Activated naive CD4-positive, alpha-beta T cell treated with anti-CD3 and anti-CD28 coated beads for 36 hours (primary cell): ENCODE measurements at regions of chr19 and their contacts with region 1.

Region 1: DNA sequence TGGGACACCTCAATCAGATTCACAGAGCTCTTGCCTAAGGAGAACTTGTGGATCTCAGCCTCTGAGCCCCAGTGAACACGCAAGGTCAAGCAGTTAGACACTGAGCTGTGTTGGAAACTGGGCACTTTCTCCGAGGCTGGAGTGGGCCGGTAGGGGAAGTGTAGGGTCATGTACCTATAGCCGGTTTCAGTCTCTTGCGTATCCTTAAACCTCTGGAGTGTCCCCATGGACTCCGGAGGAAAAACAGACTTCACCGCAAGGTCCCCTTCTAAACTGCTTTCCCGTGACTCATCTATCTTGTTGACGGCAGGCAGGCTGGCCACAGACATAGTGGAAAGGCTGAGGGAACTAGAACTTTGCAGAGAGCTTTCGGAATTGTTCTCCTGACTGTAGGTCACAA is 11.3 kb downstream of the IQCN start:
- DNase-seq: no peak
- H3K4me3 Mint-ChIP-seq: no peak overlapping the region
- H3K27ac Mint-ChIP-seq: no peak overlapping the region
- H3K4me1 Mint-ChIP-seq: no peaks in the 10 kb centered on the region
- H3K27me3 Mint-ChIP-seq: no peaks in the 10 kb centered on the region

Region 2: DNA sequence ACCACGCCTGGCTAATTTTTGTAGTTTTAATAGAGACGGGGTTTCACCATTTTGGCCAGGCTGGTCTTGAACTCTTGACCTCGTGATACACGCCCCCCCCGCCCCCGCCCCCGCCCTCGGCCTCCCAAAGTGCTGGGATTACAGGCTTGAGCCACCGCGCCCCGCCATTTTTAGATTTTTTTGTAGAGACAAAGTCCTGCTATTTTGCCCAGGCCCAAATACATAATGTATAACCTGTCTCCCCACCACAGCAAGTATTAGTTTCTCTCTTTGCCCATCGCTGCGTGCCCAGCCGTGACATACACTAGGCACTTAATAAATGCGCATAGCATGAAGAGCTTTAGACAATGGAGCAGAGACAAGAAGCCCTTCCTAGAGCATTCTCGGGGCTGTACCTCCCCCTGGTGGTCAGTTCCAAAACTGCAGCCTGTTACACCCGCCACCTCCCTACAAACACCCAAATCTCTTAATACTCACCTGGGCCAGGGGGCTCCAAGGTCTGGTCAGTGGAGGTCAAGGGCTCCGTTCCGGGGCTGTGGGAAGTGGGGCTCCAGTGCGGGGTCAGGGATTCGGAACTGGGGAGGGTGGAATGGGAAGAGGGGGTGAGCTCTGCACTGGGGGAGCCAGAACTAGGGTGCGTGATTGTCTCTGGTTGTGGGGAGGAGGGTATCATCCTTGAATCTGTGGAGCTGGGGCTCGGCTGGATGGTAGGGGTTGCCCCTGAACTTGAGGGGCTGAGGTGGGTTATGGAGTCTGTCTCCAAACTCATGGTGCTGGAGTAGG is 11.1 kb before region 1 on chr19:
- CTCF ChIA-PET with region 1: interaction called, 13 read pairs
- intact Hi-C with region 1: no loop called
- DNase-seq: peak; percentile 90
- H3K4me3 Mint-ChIP-seq: no peak overlapping the region
- H3K27ac Mint-ChIP-seq: no peak overlapping the region
- H3K4me1 Mint-ChIP-seq: peaks cover 2% of the 10 kb centered on the region
- H3K27me3 Mint-ChIP-seq: peaks cover 23% of the 10 kb centered on the region